ENCODE measurements at regions of chr1 and their contacts with region 1.

Region 1: GRCh38 chr1:156356875-156357534 is 12.0 kb upstream of the RHBG start:
- DNase-seq: peak; percentile 51 to 78 (median 68)
- H3K4me3 ChIP-seq: no peak overlapping the region
- H3K27ac ChIP-seq: no peak overlapping the region
- H3K4me1 ChIP-seq: no peaks in the 10 kb centered on the region
- H3K27me3 ChIP-seq: no peaks in the 10 kb centered on the region
- CTCF ChIP-seq: peak; percentile 51 to 78 (median 73)
- EP300 ChIP-seq: no peak
- POLR2A ChIP-seq: no peak

Region 2: DNA sequence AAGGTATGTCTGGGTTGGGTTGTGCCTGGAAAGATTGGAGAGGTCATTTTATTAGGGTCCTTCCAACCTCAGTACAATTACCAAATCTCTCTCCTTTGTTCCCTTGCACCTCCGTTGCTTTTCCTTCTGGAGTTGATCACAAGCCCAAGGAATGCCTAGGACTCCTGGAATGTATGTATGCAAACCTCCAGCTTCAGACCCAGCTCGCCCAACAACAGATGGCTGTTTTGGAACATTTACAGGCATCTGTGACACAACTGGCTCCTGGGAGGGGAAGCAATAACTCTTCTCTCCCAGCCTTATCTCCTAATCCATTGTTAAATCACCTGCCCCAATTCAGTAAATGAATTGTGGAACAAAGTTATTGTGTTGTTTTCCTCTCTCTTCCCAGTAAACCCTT is 10.4 kb before region 1 on chr1:
- intact Hi-C with region 1: no loop called
- DNase-seq: no peak
- H3K4me3 ChIP-seq: no peak overlapping the region
- H3K27ac ChIP-seq: no peak overlapping the region
- H3K4me1 ChIP-seq: no peaks in the 10 kb centered on the region
- H3K27me3 ChIP-seq: no peaks in the 10 kb centered on the region
- CTCF ChIP-seq: no peak
- EP300 ChIP-seq: no peak
- POLR2A ChIP-seq: no peak

Region 3: DNA sequence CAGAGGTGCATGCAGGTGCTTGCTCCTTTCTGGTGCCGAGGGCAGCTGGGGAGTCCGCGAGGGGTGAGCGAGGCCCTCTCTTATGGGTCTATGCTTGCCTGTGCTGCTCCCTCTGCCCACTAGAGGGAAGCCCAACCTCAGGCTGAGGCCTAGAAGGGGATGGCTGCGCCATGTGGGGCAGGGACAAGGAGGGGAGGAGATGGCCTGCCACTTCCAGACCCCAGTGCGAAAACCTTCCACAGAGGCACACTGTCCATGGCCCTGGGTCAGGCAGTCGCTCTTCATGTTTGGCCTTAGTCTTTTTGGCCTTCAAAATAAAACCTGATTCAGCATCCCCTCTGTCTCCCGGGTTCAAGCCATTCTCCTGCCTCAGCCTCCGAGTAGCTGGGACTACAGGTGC is 26.0 kb after region 1 on chr1:
- intact Hi-C with region 1: loop called in 1 of 4 experiments (anchors 1 kb)
- DNase-seq: peak in 3 of 5 donors; percentile 35 to 57 (median 49)
- H3K4me3 ChIP-seq: no peak overlapping the region
- H3K27ac ChIP-seq: no peak overlapping the region
- H3K4me1 ChIP-seq: peaks cover 3% of the 10 kb centered on the region
- H3K27me3 ChIP-seq: no peaks in the 10 kb centered on the region
- CTCF ChIP-seq: no peak
- EP300 ChIP-seq: no peak
- POLR2A ChIP-seq: no peak

Region 4: GRCh38 chr1:156445789-156446263 is 88.8 kb after region 1 on chr1:
- intact Hi-C with region 1: loop called in 3 of 4 experiments (anchors 1 to 5 kb)
- DNase-seq: peak; percentile 66 to 87 (median 82)
- H3K4me3 ChIP-seq: no peak overlapping the region
- H3K27ac ChIP-seq: no peak overlapping the region
- H3K4me1 ChIP-seq: no peaks in the 10 kb centered on the region
- H3K27me3 ChIP-seq: no peaks in the 10 kb centered on the region
- CTCF ChIP-seq: peak; percentile 81 to 84 (median 82)
- EP300 ChIP-seq: no peak
- POLR2A ChIP-seq: no peak

Region 5: GRCh38 chr1:156618853-156619581 is 262.0 kb after region 1 on chr1 and contains the start of gene HAPLN2:
- intact Hi-C with region 1: loop called in 1 of 4 experiments (anchors 10 kb)
- DNase-seq: no peak
- H3K4me3 ChIP-seq: no peak within 1 kb of the TSS
- H3K27ac ChIP-seq: no peak within 1 kb of the TSS
- H3K4me1 ChIP-seq: peaks cover 4% of the 10 kb centered on the region
- H3K27me3 ChIP-seq: no peaks in the 10 kb centered on the region
- CTCF ChIP-seq: no peak
- EP300 ChIP-seq: no peak
- POLR2A ChIP-seq: no peak
- total RNA-seq, gene HAPLN2: 0.30 to 1.9 (median 1.2) TPM